ENCODE measurements at regions of chr7 and their contacts with region 1.

Region 1: DNA sequence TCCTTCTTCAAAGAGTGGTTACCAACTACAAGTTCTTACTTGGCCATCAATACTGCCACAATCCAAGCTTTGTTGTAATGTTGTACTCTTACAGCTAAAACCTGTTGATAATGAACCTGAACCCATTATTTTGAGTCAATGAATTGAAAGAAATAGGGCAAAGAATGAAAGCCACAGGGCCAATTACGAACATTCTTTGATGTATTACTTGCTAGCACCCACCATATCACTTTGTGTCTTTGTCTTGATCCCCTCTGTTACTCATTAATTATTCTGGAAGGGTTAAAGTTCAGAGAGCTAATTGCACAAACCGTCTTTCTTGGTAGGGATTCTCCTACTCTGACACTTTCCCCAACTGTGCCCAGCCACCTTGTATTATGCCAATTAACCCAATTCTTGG is 53.2 kb upstream of the TFEC start:
- DNase-seq: no peak
- ATAC-seq: no peak
- H3K4me3 Mint-ChIP-seq: no peak overlapping the region
- H3K27ac Mint-ChIP-seq: no peak overlapping the region
- H3K4me1 Mint-ChIP-seq: no peaks in the 10 kb centered on the region
- H3K27me3 Mint-ChIP-seq: no peaks in the 10 kb centered on the region
- CTCF ChIP-seq: no peak

Region 2: DNA sequence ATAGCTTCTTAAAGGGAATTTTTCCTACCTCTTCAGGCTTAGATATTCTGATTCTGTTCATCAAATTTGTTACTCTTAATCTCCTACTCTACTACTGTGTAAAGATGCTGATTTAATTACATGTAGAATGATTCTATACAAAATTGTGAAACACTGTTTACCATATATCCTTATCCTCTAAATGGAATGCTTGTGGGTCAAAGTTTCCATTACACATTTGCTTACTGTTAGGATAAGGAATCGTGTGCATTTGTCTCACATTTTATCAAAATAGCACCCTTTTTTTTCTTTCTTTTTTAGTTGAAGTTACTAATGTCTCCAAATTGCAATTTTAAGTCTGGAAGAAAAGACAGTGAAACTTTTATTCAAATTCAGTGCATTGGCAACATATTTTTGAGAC is 118.6 kb before region 1 on chr7:
- CTCF ChIA-PET with region 1: no interaction called
- POLR2A ChIA-PET with region 1: no interaction called
- intact Hi-C with region 1: no loop called
- DNase-seq: no peak
- ATAC-seq: no peak
- H3K4me3 Mint-ChIP-seq: no peak overlapping the region
- H3K27ac Mint-ChIP-seq: no peak overlapping the region
- H3K4me1 Mint-ChIP-seq: no peaks in the 10 kb centered on the region
- H3K27me3 Mint-ChIP-seq: no peaks in the 10 kb centered on the region
- CTCF ChIP-seq: no peak

Region 3: GRCh38 chr7:116041615-116042014 is 42.2 kb before region 1 on chr7:
- CTCF ChIA-PET with region 1: no interaction called
- POLR2A ChIA-PET with region 1: no interaction called
- intact Hi-C with region 1: no loop called
- DNase-seq: no peak
- ATAC-seq: no peak
- H3K4me3 Mint-ChIP-seq: no peak overlapping the region
- H3K27ac Mint-ChIP-seq: no peak overlapping the region
- H3K4me1 Mint-ChIP-seq: peaks cover 2% of the 10 kb centered on the region
- H3K27me3 Mint-ChIP-seq: no peaks in the 10 kb centered on the region
- CTCF ChIP-seq: no peak

Region 4: DNA sequence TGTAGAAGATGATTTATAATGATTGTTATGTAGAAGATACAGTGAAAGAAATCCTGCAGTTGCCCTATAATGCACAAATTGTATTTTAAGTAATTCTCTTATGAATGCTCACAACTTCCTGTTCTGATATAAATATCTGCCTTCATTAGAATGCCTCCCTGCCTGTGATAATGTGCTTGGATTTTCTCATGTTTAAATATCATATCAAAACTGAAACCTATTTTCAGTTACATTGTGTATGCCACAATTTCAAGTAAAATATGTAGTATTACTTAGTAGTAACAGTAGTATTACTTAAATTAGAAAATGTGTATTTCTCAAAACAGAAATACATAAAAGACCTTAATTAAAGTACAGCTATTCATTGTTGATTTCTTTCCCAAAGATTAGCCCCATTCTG is 12.2 kb before region 1 on chr7:
- CTCF ChIA-PET with region 1: no interaction called
- POLR2A ChIA-PET with region 1: no interaction called
- intact Hi-C with region 1: loop called (anchors 2 kb)
- DNase-seq: no peak
- ATAC-seq: no peak
- H3K4me3 Mint-ChIP-seq: no peak overlapping the region
- H3K27ac Mint-ChIP-seq: no peak overlapping the region
- H3K4me1 Mint-ChIP-seq: no peaks in the 10 kb centered on the region
- H3K27me3 Mint-ChIP-seq: no peaks in the 10 kb centered on the region
- CTCF ChIP-seq: no peak